ENCODE measurements at regions of chr11 and their contacts with region 1.

Region 1: DNA sequence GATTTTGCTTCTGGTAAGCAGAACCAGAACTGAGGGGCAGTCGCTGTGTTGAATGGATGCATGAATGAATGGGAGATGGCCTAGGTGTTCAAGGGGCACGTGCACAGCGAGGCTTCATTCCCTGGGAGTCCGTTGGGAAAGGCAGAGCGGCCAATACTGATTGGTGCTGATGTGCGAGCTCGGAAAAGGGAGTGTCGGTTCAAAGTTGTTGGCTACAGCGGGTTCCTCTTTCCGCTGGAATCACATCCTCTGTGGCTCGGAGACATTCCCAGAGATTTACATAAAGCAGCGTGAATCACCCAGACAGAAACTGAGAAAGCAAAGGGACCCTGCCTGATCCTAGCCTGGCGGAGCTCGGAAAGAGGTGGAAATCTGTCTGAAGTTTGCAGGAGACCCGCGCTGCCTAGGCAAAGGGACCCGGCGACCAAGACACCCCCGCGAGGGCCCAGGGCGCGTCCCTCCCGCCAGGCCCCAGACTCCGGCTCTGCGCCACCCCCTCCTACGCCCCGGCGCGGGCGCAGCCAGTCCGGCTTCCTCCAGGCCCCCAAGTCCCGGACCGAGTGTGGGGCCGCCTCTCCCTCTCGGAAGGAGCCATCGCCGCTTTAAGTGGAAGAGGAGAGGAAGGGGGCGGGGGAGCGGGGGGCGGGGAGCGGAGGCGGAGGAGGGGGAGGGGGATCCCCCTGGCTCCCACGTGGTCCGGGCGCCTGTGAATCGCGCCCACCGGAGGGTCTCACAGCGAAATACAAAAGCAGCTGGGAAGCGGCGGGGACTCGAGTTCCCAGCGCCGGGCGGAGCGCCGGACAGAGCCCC is at the start of gene FJX1:
- DNase-seq: peak; percentile 77
- ATAC-seq: peak; percentile 64
- total RNA-seq, gene FJX1: 0.54 TPM

Region 2: GRCh38 chr11:35675901-35676610 is 58.2 kb after region 1 on chr11:
- intact Hi-C with region 1: no loop called
- DNase-seq: no peak
- ATAC-seq: peak; percentile 50

Region 3: DNA sequence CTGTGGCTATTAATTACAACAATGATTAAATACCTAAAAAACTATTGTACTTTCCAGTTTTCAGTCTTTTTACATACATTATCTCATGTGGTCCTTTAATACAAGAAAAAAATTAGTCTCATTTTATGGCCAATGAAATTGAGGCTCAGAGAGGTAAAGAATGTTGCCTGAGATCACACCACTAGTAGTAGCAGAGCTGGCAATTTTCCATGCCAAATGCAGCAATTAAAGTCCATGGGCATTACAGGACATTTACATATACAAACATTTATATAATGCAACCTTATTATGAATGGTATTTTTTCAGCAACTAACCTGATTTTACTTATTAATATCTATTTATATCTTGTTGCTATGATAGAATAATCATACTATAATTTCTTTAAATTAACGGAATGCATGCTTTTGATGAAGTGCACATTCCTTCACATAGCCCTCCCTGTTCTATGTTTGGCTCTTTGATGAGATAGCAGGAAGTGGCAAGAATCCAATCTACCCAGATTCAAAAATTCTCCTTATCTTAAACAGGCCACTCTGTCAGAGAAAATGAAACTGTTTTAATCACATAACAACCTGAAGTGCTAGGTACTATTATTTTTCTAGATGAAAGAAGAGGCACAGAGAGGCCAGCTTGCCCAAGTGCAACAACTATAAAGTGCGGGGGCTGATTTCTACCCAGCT is 205.1 kb after region 1 on chr11:
- intact Hi-C with region 1: loop called (anchors 5 kb)
- DNase-seq: no peak
- ATAC-seq: no peak

Region 4: DNA sequence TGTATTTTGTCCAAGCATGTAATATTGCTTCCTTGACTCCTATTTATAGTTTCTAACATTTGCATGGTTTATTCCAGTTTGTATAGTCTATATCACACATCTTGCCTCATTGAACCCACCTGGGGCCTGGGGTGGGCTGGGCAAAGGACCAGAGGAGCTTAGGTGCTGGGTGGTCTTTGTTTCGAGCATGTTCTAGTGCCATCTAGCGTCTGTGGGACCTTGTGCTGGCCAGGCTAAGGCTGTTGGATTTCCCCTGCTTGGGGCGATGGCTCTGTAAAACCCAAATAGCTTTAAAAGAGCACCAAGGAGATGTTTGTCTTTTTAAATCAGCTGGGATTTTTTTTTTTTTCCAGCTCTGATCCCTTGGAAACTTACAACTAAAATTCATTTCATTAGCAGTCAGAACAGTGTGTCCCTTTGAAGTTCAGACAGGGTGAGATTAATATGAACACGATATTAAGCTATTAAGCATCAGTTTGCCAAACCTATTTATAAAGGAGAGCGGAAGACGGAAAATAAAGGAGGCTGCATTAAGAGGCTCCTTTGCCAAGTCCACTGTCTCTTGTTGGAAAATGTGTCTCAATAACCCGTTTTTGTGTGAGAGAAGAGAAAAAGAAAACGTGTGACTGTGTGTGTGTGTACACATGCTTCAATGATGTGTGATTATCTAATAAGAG is 514.0 kb after region 1 on chr11:
- intact Hi-C with region 1: loop called (anchors 2 kb)
- DNase-seq: peak; percentile 71
- ATAC-seq: peak; percentile 71

Region 5: GRCh38 chr11:36265793-36266628 is 648.1 kb after region 1 on chr11:
- intact Hi-C with region 1: loop called (anchors 2 kb)
- DNase-seq: no peak
- ATAC-seq: peak; percentile 65

Measured in Right ventricle myocardium inferior (tissue), 1 donor.